Activated CD4-positive, alpha-beta T cell treated with anti-CD3 and anti-CD28 coated beads, Interleukin-2, amount 10 ng/mL, durations not matched to agents 24 days and 14 days (primary cell): ENCODE measurements at regions of chr18 and their contacts with region 1.

Region 1: GRCh38 chr18:59927246-59927825 is 27.5 kb downstream of the PMAIP1 start:
- DNase-seq: peak; percentile 68
- H3K4me3 Mint-ChIP-seq: peak overlapping the region; percentile 14
- H3K27ac Mint-ChIP-seq: peak overlapping the region; percentile 78
- H3K4me1 Mint-ChIP-seq: peaks cover 29% of the 10 kb centered on the region
- H3K27me3 Mint-ChIP-seq: no peaks in the 10 kb centered on the region

Region 2: GRCh38 chr18:59846814-59847490 is 80.4 kb before region 1 on chr18:
- intact Hi-C with region 1: loop called (anchors 5 kb)
- DNase-seq: peak; percentile 85
- H3K4me3 Mint-ChIP-seq: peak overlapping the region; percentile 26
- H3K27ac Mint-ChIP-seq: peak overlapping the region; percentile 91
- H3K4me1 Mint-ChIP-seq: peaks cover 21% of the 10 kb centered on the region
- H3K27me3 Mint-ChIP-seq: no peaks in the 10 kb centered on the region

Region 3: DNA sequence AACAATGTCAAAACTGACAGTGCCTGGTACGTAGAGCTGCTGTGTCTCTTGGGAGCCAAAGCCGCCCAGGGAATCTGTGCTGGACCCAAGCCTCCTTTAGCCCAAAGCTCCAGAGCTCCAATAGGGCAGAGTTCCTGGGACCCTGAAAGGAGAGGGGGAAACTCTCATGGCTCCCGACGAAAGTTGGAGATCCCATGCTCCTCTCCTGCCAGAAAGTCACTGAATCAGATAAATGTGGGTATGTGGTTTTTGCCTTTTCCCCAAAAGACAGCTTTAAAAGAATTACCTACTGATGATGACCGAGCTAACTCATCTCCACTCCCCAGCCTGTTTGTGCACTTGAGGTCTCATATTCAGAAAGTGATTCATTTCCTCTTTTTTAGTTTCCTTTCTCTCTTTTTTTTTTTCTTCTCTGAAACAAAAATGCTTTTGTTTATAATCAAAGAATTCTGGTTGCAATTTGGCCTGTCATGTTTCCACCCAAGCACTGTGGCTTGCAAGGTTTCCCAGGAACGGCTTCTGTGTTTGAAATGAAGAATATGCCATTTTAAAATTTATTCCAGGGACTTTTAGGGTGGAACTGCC is 41.7 kb before region 1 on chr18:
- intact Hi-C with region 1: loop called (anchors 1 kb)
- DNase-seq: peak; percentile 80
- H3K4me3 Mint-ChIP-seq: peak overlapping the region; percentile 61
- H3K27ac Mint-ChIP-seq: peak overlapping the region; percentile 67
- H3K4me1 Mint-ChIP-seq: peaks cover 51% of the 10 kb centered on the region
- H3K27me3 Mint-ChIP-seq: no peaks in the 10 kb centered on the region

Region 4: GRCh38 chr18:59907172-59907571 is 20.2 kb before region 1 on chr18:
- intact Hi-C with region 1: loop called (anchors 1 kb)
- DNase-seq: peak; percentile 70
- H3K4me3 Mint-ChIP-seq: peak overlapping the region; percentile 65
- H3K27ac Mint-ChIP-seq: peak overlapping the region; percentile 76
- H3K4me1 Mint-ChIP-seq: peaks cover 66% of the 10 kb centered on the region
- H3K27me3 Mint-ChIP-seq: no peaks in the 10 kb centered on the region

Region 5: GRCh38 chr18:59950215-59950944 is 23.0 kb after region 1 on chr18:
- intact Hi-C with region 1: loop called (anchors 2 kb)
- DNase-seq: no peak
- H3K4me3 Mint-ChIP-seq: no peak overlapping the region
- H3K27ac Mint-ChIP-seq: no peak overlapping the region
- H3K4me1 Mint-ChIP-seq: peaks cover 13% of the 10 kb centered on the region
- H3K27me3 Mint-ChIP-seq: peaks cover 6% of the 10 kb centered on the region